Natural killer cell (primary cell): ENCODE measurements at regions of chr1 and their contacts with region 1.

Region 1: DNA sequence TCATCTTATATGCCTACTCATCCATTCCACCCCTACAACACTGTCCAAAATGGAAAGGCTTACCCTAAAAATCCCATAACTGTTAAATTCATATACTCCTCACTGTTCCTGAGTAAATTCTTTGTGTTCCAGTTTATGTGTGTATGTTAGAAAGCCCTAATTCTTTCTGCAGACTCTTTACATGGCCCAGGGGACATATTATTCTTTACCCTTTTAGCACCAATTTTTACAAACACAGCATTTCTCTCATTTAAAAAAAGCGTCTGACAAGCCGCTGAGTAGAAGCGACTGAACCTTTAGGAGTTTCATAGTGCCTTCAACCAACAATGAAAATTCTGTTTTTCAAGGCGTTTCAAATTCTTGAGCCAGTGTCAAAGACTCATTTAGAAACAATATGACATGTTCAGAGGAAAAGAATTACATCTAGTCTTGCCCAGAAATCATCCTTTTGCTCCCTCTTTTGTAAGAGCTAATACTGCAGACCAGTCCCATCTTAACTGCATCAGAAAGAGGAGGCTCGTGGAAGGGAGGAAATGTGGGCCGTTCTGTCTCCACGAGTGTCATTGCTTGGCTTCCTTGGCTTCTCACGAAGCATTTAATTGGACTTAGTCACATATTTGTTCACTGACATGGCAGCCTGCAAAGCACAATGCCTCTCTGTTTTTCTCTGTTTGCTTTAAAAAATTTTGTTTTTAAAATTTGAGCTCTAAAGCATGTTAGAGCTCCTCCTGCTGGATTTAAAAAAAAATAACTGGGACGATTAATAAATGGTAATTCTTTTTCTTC is 21.3 kb upstream of the C1orf105 start:
- DNase-seq: peak in 1 of 2 donors; percentile 67
- ATAC-seq: peak; percentile 34 to 64 (median 52)
- H3K4me3 ChIP-seq: no peak overlapping the region
- H3K4me3 Mint-ChIP-seq: peak overlapping the region; percentile 62
- H3K27ac ChIP-seq: peak overlapping the region; percentile 13
- H3K27ac Mint-ChIP-seq: peak overlapping the region; percentile 38 to 72
- H3K4me1 ChIP-seq: peaks cover 20% of the 10 kb centered on the region
- H3K4me1 Mint-ChIP-seq: peaks cover 46 to 55% of the 10 kb centered on the region in 2 donors
- H3K27me3 ChIP-seq: no peaks in the 10 kb centered on the region
- H3K27me3 Mint-ChIP-seq: no peaks in the 10 kb centered on the region
- CTCF ChIP-seq: peak; percentile 90

Region 2: GRCh38 chr1:172002725-172003345 is 396.3 kb before region 1 on chr1:
- intact Hi-C with region 1: loop called (anchors 2 kb)
- DNase-seq: peak in 1 of 2 donors; percentile 68
- ATAC-seq: peak in 1 of 3 donors; percentile 49
- H3K4me3 ChIP-seq: no peak overlapping the region
- H3K4me3 Mint-ChIP-seq: no peak overlapping the region
- H3K27ac ChIP-seq: no peak overlapping the region
- H3K27ac Mint-ChIP-seq: no peak overlapping the region
- H3K4me1 ChIP-seq: no peaks in the 10 kb centered on the region
- H3K4me1 Mint-ChIP-seq: peaks cover 0 to 8% of the 10 kb centered on the region in 2 donors
- H3K27me3 ChIP-seq: no peaks in the 10 kb centered on the region
- H3K27me3 Mint-ChIP-seq: no peaks in the 10 kb centered on the region
- CTCF ChIP-seq: peak; percentile 55

Region 3: GRCh38 chr1:172089768-172090510 is 309.2 kb before region 1 on chr1:
- intact Hi-C with region 1: loop called (anchors 1 kb)
- DNase-seq: peak in 1 of 2 donors; percentile 79
- ATAC-seq: peak in 2 of 3 donors; percentile 59 to 72
- H3K4me3 ChIP-seq: no peak overlapping the region
- H3K4me3 Mint-ChIP-seq: no peak overlapping the region
- H3K27ac ChIP-seq: no peak overlapping the region
- H3K27ac Mint-ChIP-seq: no peak overlapping the region
- H3K4me1 ChIP-seq: no peaks in the 10 kb centered on the region
- H3K4me1 Mint-ChIP-seq: peaks cover 6% of the 10 kb centered on the region in 2 donors
- H3K27me3 ChIP-seq: no peaks in the 10 kb centered on the region
- H3K27me3 Mint-ChIP-seq: peaks cover 6 to 8% of the 10 kb centered on the region in 2 donors
- CTCF ChIP-seq: peak; percentile 54

Region 4: DNA sequence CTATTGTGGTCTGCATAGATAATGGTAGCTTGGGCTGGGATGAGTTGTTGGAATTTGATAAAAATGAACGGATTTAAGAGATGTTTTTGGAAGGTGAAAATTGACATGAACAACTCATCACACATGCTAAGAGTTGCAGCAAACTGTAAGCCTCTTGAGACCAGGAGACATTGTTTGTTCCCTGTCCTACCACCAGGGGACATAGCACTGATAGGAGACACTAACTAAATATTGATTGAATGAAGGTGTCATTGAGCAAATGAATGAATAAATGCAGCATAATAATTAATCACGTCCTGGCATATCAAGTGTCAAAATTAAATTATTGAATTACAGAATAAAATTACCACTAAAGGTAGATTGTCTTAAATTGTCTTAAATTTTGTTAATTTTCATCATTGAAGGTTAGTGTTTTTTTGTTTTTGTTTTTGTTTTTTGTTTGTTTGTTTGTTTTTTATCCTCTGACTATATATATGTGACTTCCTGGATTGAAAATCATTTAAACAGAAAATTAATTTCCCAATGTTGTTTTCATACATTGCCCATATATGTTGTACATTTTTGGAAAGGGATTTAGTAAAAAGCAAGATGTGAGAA is 264.0 kb before region 1 on chr1:
- intact Hi-C with region 1: loop called (anchors 1 kb)
- DNase-seq: peak in 1 of 2 donors; percentile 69
- ATAC-seq: peak in 2 of 3 donors; percentile 69 to 72
- H3K4me3 ChIP-seq: no peak overlapping the region
- H3K4me3 Mint-ChIP-seq: no peak overlapping the region
- H3K27ac ChIP-seq: no peak overlapping the region
- H3K27ac Mint-ChIP-seq: peak overlapping the region in 1 of 2 donors; percentile 11
- H3K4me1 ChIP-seq: no peaks in the 10 kb centered on the region
- H3K4me1 Mint-ChIP-seq: peaks cover 0 to 7% of the 10 kb centered on the region in 2 donors
- H3K27me3 ChIP-seq: no peaks in the 10 kb centered on the region
- H3K27me3 Mint-ChIP-seq: peaks cover 0 to 3% of the 10 kb centered on the region in 2 donors
- CTCF ChIP-seq: peak; percentile 81

Region 5: DNA sequence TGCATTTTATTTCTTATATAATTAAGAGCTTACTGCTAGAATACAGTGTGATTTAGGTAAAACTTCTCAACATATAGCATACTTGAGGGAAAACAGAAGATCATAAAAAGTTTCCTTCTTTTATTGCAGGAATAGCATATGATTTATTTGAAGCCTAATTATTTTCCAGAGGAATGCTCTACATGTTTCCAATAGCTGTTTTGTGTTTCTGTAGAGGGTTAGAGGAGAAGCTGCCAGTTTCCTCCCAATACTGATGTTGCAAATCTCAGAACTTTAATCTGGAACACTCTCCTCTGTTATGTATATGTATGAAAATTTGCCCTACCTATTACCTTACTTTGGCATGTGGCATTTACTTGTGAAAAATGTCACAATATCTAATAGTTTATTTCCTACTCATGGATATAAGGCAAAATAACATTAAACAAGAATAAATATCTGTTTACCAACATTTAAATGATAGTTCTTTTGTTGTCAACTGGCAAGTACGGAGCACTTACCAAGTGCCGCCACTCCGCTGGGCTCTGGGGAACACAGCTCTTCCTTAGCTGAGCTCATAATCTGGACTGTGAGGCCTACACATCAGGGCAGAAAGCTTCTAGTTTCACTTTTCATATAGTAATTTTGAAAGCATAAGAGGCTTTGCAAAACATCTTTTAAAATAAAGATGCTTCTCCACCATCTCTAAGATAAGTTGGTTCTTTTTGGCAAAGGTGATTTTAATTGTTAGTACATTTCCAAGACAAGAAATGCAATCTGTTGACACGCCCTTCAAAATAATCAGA is 218.5 kb before region 1 on chr1:
- intact Hi-C with region 1: loop called (anchors 1 kb)
- DNase-seq: peak; percentile 22 to 71
- ATAC-seq: peak; percentile 67 to 79 (median 73)
- H3K4me3 ChIP-seq: peak overlapping the region; percentile 14
- H3K4me3 Mint-ChIP-seq: peak overlapping the region; percentile 89
- H3K27ac ChIP-seq: peak overlapping the region; percentile 94
- H3K27ac Mint-ChIP-seq: peak overlapping the region; percentile 97
- H3K4me1 ChIP-seq: peaks cover 14% of the 10 kb centered on the region
- H3K4me1 Mint-ChIP-seq: peaks cover 21 to 24% of the 10 kb centered on the region in 2 donors
- H3K27me3 ChIP-seq: no peaks in the 10 kb centered on the region
- H3K27me3 Mint-ChIP-seq: no peaks in the 10 kb centered on the region
- CTCF ChIP-seq: no peak

Region 6: GRCh38 chr1:172357753-172358385 is 41.3 kb before region 1 on chr1:
- intact Hi-C with region 1: loop called (anchors 2 kb)
- DNase-seq: peak in 1 of 2 donors; percentile 40
- ATAC-seq: peak; percentile 16 to 41 (median 27)
- H3K4me3 ChIP-seq: no peak overlapping the region
- H3K4me3 Mint-ChIP-seq: peak overlapping the region; percentile 81
- H3K27ac ChIP-seq: peak overlapping the region; percentile 82
- H3K27ac Mint-ChIP-seq: peak overlapping the region; percentile 89 to 90
- H3K4me1 ChIP-seq: peaks cover 20% of the 10 kb centered on the region
- H3K4me1 Mint-ChIP-seq: peaks cover 41 to 50% of the 10 kb centered on the region in 2 donors
- H3K27me3 ChIP-seq: no peaks in the 10 kb centered on the region
- H3K27me3 Mint-ChIP-seq: no peaks in the 10 kb centered on the region
- CTCF ChIP-seq: no peak

Region 7: GRCh38 chr1:172380441-172381244 is 18.5 kb before region 1 on chr1:
- intact Hi-C with region 1: loop called (anchors 2 kb)
- DNase-seq: peak in 1 of 2 donors; percentile 79
- ATAC-seq: peak; percentile 94 to 95 (median 95)
- H3K4me3 ChIP-seq: no peak overlapping the region
- H3K4me3 Mint-ChIP-seq: peak overlapping the region; percentile 72
- H3K27ac ChIP-seq: peak overlapping the region; percentile 87
- H3K27ac Mint-ChIP-seq: peak overlapping the region; percentile 90 to 91
- H3K4me1 ChIP-seq: no peaks in the 10 kb centered on the region
- H3K4me1 Mint-ChIP-seq: peaks cover 27 to 31% of the 10 kb centered on the region in 2 donors
- H3K27me3 ChIP-seq: no peaks in the 10 kb centered on the region
- H3K27me3 Mint-ChIP-seq: no peaks in the 10 kb centered on the region
- CTCF ChIP-seq: no peak